PC-9 (cell line): ENCODE measurements at regions of chr12 and their contacts with region 1.

Region 1: GRCh38 chr12:85697003-85697402 is 139.2 kb downstream of the RASSF9 start:
- DNase-seq: no peak
- H3K4me3 ChIP-seq: no peak overlapping the region
- H3K27ac ChIP-seq: no peak overlapping the region
- H3K4me1 ChIP-seq: no peaks in the 10 kb centered on the region
- H3K27me3 ChIP-seq: no peaks in the 10 kb centered on the region
- CTCF ChIP-seq: no peak

Region 2: GRCh38 chr12:85588221-85588620 is 108.8 kb before region 1 on chr12:
- CTCF ChIA-PET with region 1: no interaction called
- POLR2A ChIA-PET with region 1: interaction called, 11 read pairs
- intact Hi-C with region 1: no loop called
- DNase-seq: no peak
- H3K4me3 ChIP-seq: no peak overlapping the region
- H3K27ac ChIP-seq: no peak overlapping the region
- H3K4me1 ChIP-seq: no peaks in the 10 kb centered on the region
- H3K27me3 ChIP-seq: no peaks in the 10 kb centered on the region
- CTCF ChIP-seq: no peak

Region 3: DNA sequence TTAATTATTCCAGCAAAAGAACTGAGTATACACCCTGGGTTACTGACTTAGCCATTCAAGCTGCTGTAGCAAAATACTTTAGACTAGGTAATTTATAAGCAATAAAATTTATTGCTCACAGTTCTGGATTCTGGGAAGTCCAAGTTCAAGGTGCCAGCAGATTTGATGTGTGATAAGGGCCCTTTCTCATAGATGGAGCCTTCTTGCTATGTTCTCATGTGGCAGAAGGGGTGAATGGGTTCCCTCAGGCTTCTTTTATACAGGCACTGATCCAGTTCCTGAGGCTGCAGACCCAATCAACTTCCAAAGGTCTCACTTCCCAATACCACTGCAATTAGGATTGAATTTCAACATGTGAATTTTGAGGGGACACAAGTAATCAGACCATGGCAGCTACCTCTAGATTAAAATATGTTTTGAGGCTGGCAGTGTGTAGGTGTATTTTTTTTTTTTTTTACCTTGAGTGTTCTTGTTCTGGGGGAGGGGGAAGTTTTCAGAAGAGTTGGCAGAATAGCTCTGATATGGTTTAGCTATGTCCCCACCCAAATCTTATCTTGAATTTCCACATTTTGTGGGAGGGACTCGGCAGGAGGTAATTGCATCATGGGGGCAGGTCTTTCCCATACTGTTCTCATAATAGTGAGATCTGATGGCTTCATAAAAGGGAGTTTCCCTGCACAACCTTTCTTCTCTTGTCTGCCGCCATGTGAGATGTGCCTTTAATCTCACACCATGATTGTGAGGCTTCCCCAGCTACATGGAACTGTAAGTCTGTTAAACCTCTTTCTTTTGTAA is 39.0 kb before region 1 on chr12:
- CTCF ChIA-PET with region 1: no interaction called
- POLR2A ChIA-PET with region 1: no interaction called
- intact Hi-C with region 1: no loop called
- DNase-seq: no peak
- H3K4me3 ChIP-seq: no peak overlapping the region
- H3K27ac ChIP-seq: no peak overlapping the region
- H3K4me1 ChIP-seq: no peaks in the 10 kb centered on the region
- H3K27me3 ChIP-seq: no peaks in the 10 kb centered on the region
- CTCF ChIP-seq: no peak